Activated CD4-positive, alpha-beta memory T cell treated with anti-CD3 and anti-CD28 coated beads for 36 hours (primary cell): ENCODE measurements at regions of chr11 and their contacts with region 1.

Region 1: DNA sequence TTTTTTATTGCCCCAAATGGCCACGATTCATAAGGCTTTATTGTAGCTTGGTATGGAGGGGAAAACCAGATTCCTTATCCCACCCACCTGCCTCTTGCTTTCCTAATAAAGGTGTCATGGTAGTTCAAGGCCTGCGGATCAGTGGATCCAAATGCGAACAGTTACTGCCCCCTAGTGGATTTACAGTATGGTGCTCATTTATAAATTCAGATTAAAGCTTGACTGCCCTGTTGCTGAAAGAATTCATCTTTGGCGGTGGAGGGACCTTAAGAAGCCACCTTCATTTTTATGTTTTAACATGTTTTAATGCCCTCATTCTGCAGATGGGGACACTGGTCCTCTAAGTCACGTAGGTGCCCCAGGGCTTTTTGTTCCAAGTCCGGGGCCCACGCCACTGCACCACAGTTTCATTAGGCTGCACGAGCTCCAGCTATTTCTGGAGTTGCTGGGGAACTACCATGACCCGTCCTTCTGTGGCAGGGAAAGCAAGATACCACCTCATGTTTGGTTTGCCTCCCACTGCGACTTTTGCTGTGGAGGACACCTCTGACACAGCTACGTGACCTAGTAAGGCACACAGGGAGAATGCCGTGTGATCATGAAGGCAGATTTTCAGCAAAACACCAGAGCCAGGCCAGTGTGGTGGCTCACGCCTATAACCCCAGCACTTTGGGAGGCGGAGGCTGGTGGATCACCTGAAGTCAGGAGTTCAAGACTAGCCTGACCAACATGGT is 15.6 kb upstream of the INCENP start:
- DNase-seq: peak; percentile 34
- H3K4me3 Mint-ChIP-seq: no peak overlapping the region
- H3K27ac Mint-ChIP-seq: no peak overlapping the region
- H3K4me1 Mint-ChIP-seq: peaks cover 17% of the 10 kb centered on the region
- H3K27me3 Mint-ChIP-seq: no peaks in the 10 kb centered on the region

Region 2: DNA sequence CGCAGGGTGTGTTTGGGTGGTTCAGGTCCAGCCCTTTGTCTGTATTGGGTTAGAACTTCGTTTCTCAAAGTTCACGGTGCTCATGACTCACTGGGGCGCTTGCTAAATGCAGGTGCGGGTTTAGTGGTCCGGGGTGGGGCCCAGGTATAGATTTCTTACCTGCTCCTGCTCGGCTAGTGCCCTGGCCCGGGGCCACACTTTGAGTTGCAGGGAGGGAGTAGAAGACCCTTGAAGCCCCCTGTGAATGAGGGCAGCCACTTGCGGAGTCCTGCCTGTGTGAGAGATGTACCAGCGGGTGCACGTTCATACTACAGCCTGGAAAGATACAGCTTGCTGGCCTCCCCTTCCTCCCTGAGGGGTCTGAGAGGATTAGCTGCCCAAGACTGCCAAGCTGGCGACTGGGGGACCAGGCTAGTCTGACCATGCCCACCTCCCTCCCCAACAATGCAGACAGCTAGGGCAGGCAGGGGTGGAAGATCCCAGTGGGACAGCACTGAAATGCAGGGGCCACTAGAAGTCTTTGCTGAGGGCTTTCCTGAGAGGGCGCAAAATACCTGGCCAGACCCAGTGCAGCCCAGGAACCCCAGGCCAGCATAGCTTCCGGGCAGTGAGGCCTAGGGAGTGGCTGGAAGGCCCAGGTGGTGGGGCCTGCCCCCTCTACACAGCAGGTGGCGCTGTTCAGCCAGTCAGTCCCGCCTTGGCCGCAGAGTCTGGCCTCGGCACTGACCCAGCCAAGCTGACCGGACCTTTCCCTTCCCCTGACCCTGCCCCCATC is 360.8 kb before region 1 on chr11:
- CTCF ChIA-PET with region 1: interaction called, 24 read pairs
- POLR2A ChIA-PET with region 1: no interaction called
- intact Hi-C with region 1: no loop called
- DNase-seq: peak; percentile 66
- H3K4me3 Mint-ChIP-seq: no peak overlapping the region
- H3K27ac Mint-ChIP-seq: no peak overlapping the region
- H3K4me1 Mint-ChIP-seq: peaks cover 2% of the 10 kb centered on the region
- H3K27me3 Mint-ChIP-seq: peaks cover 18% of the 10 kb centered on the region

Region 3: GRCh38 chr11:61871158-61871597 is 237.0 kb before region 1 on chr11:
- CTCF ChIA-PET with region 1: interaction called, 51 read pairs
- POLR2A ChIA-PET with region 1: no interaction called
- intact Hi-C with region 1: loop called (anchors 1 kb)
- DNase-seq: peak; percentile 80
- H3K4me3 Mint-ChIP-seq: no peak overlapping the region
- H3K27ac Mint-ChIP-seq: no peak overlapping the region
- H3K4me1 Mint-ChIP-seq: peaks cover 2% of the 10 kb centered on the region
- H3K27me3 Mint-ChIP-seq: peaks cover 2% of the 10 kb centered on the region

Region 4: GRCh38 chr11:61891331-61892084 is 216.7 kb before region 1 on chr11 and contains the start of gene FADS3:
- CTCF ChIA-PET with region 1: interaction called, 277 read pairs
- POLR2A ChIA-PET with region 1: no interaction called
- intact Hi-C with region 1: no loop called
- DNase-seq: peak; percentile 62
- H3K4me3 Mint-ChIP-seq: peak within 1 kb of the TSS; percentile 81
- H3K27ac Mint-ChIP-seq: peak within 1 kb of the TSS; percentile 23
- H3K4me1 Mint-ChIP-seq: peaks cover 2% of the 10 kb centered on the region
- H3K27me3 Mint-ChIP-seq: no peaks in the 10 kb centered on the region
- total RNA-seq, gene FADS3: 11.9 to 12.1 TPM

Region 5: DNA sequence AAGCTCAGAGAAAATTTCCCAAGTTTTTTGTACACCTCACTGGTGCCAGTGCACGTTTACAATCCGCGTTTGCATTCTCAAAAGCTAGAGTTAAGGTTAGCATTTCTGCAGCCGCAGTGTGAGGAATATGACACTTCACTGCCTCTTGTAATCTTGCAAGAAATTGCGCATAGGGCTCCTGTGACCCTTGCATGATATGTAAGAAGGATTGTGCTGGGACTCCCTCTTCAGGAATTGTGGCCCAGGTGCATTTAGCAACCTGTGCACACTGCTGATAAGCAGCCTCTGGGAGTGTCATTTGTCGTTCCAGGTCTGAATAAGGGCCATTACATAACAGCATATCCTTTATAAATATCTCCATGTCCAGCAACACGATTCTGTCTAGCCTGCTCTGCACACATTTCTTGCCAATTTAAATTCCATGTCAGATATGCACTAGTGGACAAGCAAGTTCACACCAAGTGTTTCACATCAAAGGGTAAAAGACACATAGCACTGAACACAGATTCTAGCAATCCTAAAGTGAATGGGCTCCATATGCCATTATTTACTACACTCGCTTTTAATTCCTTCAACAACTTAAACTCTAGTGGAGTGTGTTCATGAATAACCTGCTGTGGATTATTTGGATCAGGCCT is 53.6 kb before region 1 on chr11:
- CTCF ChIA-PET with region 1: no interaction called
- POLR2A ChIA-PET with region 1: no interaction called
- intact Hi-C with region 1: no loop called
- DNase-seq: peak; percentile 22
- H3K4me3 Mint-ChIP-seq: no peak overlapping the region
- H3K27ac Mint-ChIP-seq: no peak overlapping the region
- H3K4me1 Mint-ChIP-seq: no peaks in the 10 kb centered on the region
- H3K27me3 Mint-ChIP-seq: peaks cover 3% of the 10 kb centered on the region

Region 6: GRCh38 chr11:62123669-62124185 is 15.5 kb after region 1 on chr11 and contains the start of gene INCENP:
- CTCF ChIA-PET with region 1: interaction called, 26 read pairs
- POLR2A ChIA-PET with region 1: interaction called, 3 read pairs
- intact Hi-C with region 1: no loop called
- DNase-seq: peak; percentile 97
- H3K4me3 Mint-ChIP-seq: peak within 1 kb of the TSS; percentile 98
- H3K27ac Mint-ChIP-seq: peak within 1 kb of the TSS; percentile 86
- H3K4me1 Mint-ChIP-seq: peaks cover 22% of the 10 kb centered on the region
- H3K27me3 Mint-ChIP-seq: no peaks in the 10 kb centered on the region
- total RNA-seq, gene INCENP: 128 to 133 TPM